ENCODE measurements at regions of chr3 and their contacts with region 1.

Region 1: DNA sequence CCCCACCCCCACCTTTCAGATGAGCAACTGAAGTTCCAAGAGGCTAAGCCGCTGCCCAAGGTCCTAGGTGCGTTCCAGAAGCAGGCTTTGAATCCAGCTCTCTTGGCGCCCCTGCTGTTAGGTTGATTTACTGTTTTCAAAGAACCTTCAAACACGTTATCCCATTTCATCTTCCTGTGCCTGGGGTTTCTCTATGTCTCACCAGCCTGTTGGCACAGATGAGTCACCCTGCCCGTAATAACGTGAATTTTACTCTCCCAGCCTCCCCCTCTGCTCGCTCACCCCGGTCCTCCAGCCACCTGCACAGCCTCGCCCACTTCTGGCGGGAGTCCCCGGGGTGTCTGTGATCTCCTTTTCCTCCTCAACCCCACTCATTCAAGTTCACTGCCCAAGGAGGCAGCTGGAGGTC is 13.0 kb upstream of the TSEN2 start:
- DNase-seq: peak; percentile 99
- ATAC-seq: peak; percentile 84
- H3K4me3 ChIP-seq: no peak overlapping the region
- H3K27ac ChIP-seq: peak overlapping the region; percentile 99
- H3K4me1 ChIP-seq: peaks cover 35% of the 10 kb centered on the region
- H3K27me3 ChIP-seq: no peaks in the 10 kb centered on the region
- CTCF ChIP-seq: peak; percentile 72

Region 2: DNA sequence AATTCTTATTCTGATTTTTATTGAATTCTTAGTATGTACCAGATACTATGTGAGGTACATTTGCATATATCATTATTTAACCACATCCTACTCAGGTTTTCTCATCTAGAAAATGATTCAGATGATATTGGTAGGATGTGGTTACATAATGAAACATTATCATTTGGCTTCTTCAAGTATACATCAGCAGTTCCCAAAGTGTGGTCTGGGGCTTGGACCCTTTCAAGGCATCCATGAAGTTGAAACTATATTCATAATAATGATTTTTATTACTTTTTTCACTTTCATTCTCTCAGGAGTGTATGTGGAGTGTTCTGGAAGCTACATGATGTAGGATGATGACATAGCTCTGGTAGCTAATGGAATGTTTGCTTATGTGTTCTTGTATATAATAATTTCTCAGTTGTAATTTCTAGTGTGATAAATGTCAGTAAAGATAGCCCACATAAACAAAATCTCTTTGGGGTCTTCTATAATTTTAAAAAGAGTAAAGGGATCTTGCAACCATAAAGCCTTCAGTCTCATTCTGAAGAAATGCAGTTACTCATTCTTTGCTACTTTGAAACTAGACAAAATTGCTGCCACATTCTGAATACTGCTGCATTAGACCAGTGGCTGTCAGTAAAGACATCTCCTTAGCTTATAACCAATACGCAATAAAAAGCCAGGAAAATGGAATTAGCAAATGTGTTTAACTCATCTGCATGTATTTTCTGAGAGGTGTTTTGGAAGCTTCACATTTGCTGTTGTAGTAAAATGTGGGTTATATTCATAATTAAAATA is 86.6 kb before region 1 on chr3:
- CTCF ChIA-PET with region 1: interaction called, 6 read pairs
- POLR2A ChIA-PET with region 1: no interaction called
- intact Hi-C with region 1: loop called (anchors 2 kb)
- DNase-seq: no peak
- ATAC-seq: no peak
- H3K4me3 ChIP-seq: no peak overlapping the region
- H3K27ac ChIP-seq: peak overlapping the region; percentile 10
- H3K4me1 ChIP-seq: peaks cover 44% of the 10 kb centered on the region
- H3K27me3 ChIP-seq: no peaks in the 10 kb centered on the region
- CTCF ChIP-seq: no peak

Region 3: GRCh38 chr3:12405432-12406272 is 65.6 kb before region 1 on chr3:
- CTCF ChIA-PET with region 1: interaction called, 6 read pairs
- POLR2A ChIA-PET with region 1: no interaction called
- intact Hi-C with region 1: loop called (anchors 1 kb)
- DNase-seq: peak; percentile 98
- ATAC-seq: peak; percentile 94
- H3K4me3 ChIP-seq: 0 out of 2 replicates have a peak overlapping the region, but pooled peaks have one; percentile 15
- H3K27ac ChIP-seq: peak overlapping the region; percentile 92
- H3K4me1 ChIP-seq: peaks cover 59% of the 10 kb centered on the region
- H3K27me3 ChIP-seq: no peaks in the 10 kb centered on the region
- CTCF ChIP-seq: no peak

Measured in PC-3 (cell line).